ENCODE measurements at regions of chr7 and their contacts with region 1.

Region 1: GRCh38 chr7:23474094-23474828 is 4.0 kb upstream of the IGF2BP3 start:
- DNase-seq: peak; percentile 96 to 98 (median 97)
- ATAC-seq: peak; percentile 71
- H3K4me3 ChIP-seq: peak overlapping the region; percentile 66
- H3K27ac ChIP-seq: peak overlapping the region; percentile 93
- H3K4me1 ChIP-seq: peaks cover 2 to 16% of the 10 kb centered on the region in 2 experiments; a peak in 3 of 5 replicates
- H3K27me3 ChIP-seq: no peaks in the 10 kb centered on the region
- CTCF ChIP-seq: no peak
- EP300 ChIP-seq: peak; percentile 71
- POLR2A ChIP-seq: peak; percentile 85
- RAD21 ChIP-seq: peak in 1 of 2 experiments; percentile 17; a peak in 1 of 4 replicates

Region 2: DNA sequence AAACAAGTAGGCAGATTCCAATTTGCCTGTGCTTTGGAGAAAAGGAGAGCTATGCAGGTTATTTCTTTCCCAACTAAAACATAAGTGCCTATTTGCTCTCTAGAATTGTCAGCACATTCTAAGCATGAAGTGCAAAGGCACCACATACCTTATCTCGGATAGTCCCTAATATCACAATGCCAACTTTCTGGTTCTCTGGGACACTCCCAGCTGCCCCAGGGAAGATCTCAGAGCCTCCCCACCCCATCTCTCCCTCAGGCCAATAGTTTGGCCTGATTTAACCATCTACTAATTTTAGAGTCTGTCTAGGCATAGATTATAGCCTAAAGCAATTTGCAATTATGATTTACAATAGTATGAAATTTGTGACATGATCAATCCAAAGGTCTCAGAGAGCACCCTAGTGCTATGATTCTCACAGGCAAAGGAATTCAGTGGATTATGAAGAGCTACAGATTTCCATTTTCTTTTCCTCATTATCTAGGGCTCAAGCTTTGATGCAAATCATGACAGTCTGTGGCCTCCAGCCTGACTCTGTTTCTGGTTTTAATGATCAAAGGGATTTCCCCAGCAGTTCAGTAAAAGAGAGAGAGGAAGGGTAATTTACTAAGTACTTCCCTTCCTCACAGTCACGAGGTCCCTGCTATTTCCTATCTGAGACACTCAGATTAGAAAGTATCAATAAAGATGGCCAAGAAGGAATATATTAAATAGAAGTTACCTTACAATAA is 776.2 kb before region 1 on chr7:
- CTCF ChIA-PET with region 1: no interaction called
- POLR2A ChIA-PET with region 1: no interaction called
- in situ Hi-C with region 1: no loop called
- intact Hi-C with region 1: loop called (anchors 5 kb)
- DNase-seq: no peak
- ATAC-seq: no peak
- H3K4me3 ChIP-seq: no peak overlapping the region
- H3K27ac ChIP-seq: peak overlapping the region; percentile 21; the same call in 1 of the 3 replicates
- H3K4me1 ChIP-seq: peaks cover 19 to 68% of the 10 kb centered on the region in 2 experiments
- H3K27me3 ChIP-seq: no peaks in the 10 kb centered on the region
- CTCF ChIP-seq: no peak
- EP300 ChIP-seq: no peak
- POLR2A ChIP-seq: no peak
- RAD21 ChIP-seq: no peak

Region 3: DNA sequence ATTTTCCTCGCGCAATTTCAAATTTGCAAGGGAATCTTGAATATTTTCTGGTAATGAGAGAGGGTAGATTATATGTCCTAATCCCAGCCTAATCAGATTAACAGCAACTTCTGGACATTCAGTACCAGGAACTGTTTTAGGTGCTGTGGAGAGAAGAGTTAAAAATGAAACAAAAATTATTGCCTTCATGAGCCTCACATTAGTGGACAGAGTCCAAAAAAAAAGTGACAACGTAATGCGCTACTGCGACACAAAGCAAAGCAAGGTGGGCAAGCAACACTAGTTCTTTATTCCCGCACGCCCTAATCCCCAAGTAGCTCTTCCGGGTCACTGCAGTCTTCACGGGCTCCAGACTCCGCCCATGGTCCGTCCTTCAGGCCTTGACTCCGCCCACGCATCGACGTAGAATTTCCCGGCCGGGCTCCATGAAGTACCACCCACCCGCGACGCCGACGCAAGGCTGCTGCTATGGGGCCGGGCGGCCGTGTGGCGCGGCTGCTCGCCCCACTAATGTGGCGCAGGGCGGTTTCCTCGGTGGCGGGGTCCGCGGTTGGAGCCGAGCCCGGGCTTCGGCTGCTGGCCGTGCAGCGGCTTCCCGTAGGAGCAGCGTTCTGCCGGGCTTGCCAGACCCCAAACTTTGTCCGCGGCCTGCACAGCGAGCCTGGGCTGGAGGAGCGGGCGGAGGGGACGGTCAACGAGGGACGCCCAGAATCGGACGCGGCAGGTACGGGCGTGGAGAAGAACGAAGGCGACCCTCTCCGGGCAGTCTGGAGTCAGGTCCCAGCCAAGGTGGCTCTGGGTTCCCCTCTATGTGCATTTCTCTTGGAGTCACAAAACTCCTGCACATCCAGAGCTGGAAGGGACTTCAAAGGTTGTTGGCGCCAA is 175.1 kb before region 1 on chr7 and contains the start of gene MALSU1:
- CTCF ChIA-PET with region 1: no interaction called
- POLR2A ChIA-PET with region 1: interaction called, 4 read pairs
- in situ Hi-C with region 1: no loop called
- intact Hi-C with region 1: loop called (anchors 5 kb)
- DNase-seq: peak; percentile 94 to 99 (median 95)
- ATAC-seq: peak; percentile 99
- H3K4me3 ChIP-seq: peak within 1 kb of the TSS; percentile 81
- H3K27ac ChIP-seq: peak within 1 kb of the TSS; percentile 62
- H3K4me1 ChIP-seq: peaks cover 0 to 13% of the 10 kb centered on the region in 2 experiments; a peak in 4 of 5 replicates
- H3K27me3 ChIP-seq: no peaks in the 10 kb centered on the region
- CTCF ChIP-seq: 0 out of 6 replicates have a peak, but pooled peaks of 1 of the 3 experiments have one; percentile 1
- EP300 ChIP-seq: no peak
- POLR2A ChIP-seq: peak; percentile 94
- RAD21 ChIP-seq: no peak
- polyA plus RNA-seq, gene MALSU1: 12.3 to 14.4 TPM

Region 4: GRCh38 chr7:23357190-23358093 is 116.8 kb before region 1 on chr7:
- CTCF ChIA-PET with region 1: no interaction called
- POLR2A ChIA-PET with region 1: interaction called, 3 read pairs
- in situ Hi-C with region 1: no loop called
- intact Hi-C with region 1: loop called (anchors 5 kb)
- DNase-seq: peak; percentile 41 to 53 (median 51)
- ATAC-seq: peak; percentile 87
- H3K4me3 ChIP-seq: no peak overlapping the region
- H3K27ac ChIP-seq: peak overlapping the region; percentile 42; the same call in 1 of the 3 replicates
- H3K4me1 ChIP-seq: peaks cover 0 to 8% of the 10 kb centered on the region in 2 experiments; a peak in 2 of 5 replicates
- H3K27me3 ChIP-seq: no peaks in the 10 kb centered on the region
- CTCF ChIP-seq: peak; percentile 35 to 69 (median 43); a peak in 4 of 6 replicates
- EP300 ChIP-seq: no peak
- POLR2A ChIP-seq: no peak
- RAD21 ChIP-seq: peak; percentile 55 to 74

Region 5: GRCh38 chr7:23431702-23432199 is 42.5 kb before region 1 on chr7:
- CTCF ChIA-PET with region 1: no interaction called
- POLR2A ChIA-PET with region 1: interaction called, 4 read pairs
- in situ Hi-C with region 1: no loop called
- intact Hi-C with region 1: loop called (anchors 1 kb)
- DNase-seq: peak; percentile 41 to 56 (median 52)
- ATAC-seq: peak; percentile 62
- H3K4me3 ChIP-seq: no peak overlapping the region
- H3K27ac ChIP-seq: peak overlapping the region; percentile 41; the same call in 1 of the 3 replicates
- H3K4me1 ChIP-seq: peaks cover 11 to 48% of the 10 kb centered on the region in 2 experiments; a peak in 4 of 5 replicates
- H3K27me3 ChIP-seq: no peaks in the 10 kb centered on the region
- CTCF ChIP-seq: no peak
- EP300 ChIP-seq: peak; percentile 16; the same call in 1 of the 2 replicates
- POLR2A ChIP-seq: no peak
- RAD21 ChIP-seq: no peak

Region 6: GRCh38 chr7:23531794-23532489 is 57.7 kb after region 1 on chr7 and contains the start of gene TRA2A:
- CTCF ChIA-PET with region 1: interaction called, 3 read pairs
- POLR2A ChIA-PET with region 1: interaction called, 12 read pairs
- in situ Hi-C with region 1: no loop called
- intact Hi-C with region 1: loop called (anchors 1 kb)
- DNase-seq: peak; percentile 90 to 98 (median 92)
- ATAC-seq: peak; percentile 86
- H3K4me3 ChIP-seq: peak within 1 kb of the TSS; percentile 78
- H3K27ac ChIP-seq: peak within 1 kb of the TSS; percentile 96
- H3K4me1 ChIP-seq: peaks cover 14 to 15% of the 10 kb centered on the region in 2 experiments; a peak in 4 of 5 replicates
- H3K27me3 ChIP-seq: no peaks in the 10 kb centered on the region
- CTCF ChIP-seq: no peak
- EP300 ChIP-seq: peak; percentile 4; the same call in 1 of the 2 replicates
- POLR2A ChIP-seq: peak; percentile 98
- RAD21 ChIP-seq: no peak
- polyA plus RNA-seq, gene TRA2A: 54.4 to 58.6 TPM

Measured in K562 (cell line).